ENCODE measurements at regions of chr1 and their contacts with region 1.

Region 1: DNA sequence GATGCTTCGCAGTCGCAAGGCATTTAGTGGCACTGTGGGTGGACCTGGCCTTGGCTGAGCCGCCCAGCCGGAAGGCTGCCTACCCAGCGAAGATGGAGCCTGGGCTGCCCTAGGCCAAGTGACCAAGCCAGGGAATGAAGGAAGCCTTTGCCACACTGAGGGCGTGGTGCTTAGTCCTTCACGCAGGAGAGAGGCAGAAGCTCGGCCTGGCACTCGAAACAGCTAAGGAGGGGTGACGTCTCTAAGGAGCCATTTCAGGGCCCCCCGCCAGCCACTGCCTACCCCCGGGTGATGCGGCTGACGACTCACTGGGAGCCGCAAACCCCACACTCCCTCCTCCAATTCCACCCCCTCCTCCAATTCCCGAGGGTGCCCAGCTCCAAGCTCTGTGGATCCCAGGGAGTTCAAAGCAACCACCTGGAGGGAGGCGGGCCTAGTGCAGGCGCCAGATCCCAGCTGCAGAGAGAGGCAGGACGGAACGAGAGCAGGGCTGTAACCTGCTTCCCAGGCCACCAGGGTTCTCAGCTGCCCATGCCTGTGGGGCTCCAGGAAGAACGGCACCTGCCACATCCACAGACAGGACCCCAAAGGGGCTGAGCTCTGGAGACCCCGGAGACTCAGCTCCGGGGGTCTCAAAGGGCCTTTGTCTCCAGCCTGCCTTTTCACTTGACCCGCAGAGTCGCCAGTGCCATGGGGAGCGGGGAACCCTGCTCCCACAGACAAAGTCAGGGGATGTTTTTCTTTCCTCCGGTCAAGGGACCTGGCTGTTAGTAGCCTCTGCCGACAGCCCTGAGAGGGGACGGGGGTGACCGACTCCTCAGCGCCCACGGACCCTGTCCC is 75.8 kb downstream of the ARHGEF16 start:
- DNase-seq: no peak
- ATAC-seq: no peak
- H3K4me3 Mint-ChIP-seq: peak overlapping the region; percentile 71
- H3K27ac Mint-ChIP-seq: peak overlapping the region; percentile 57
- H3K4me1 Mint-ChIP-seq: peaks cover 12% of the 10 kb centered on the region
- H3K27me3 Mint-ChIP-seq: no peaks in the 10 kb centered on the region
- CTCF ChIP-seq: no peak

Region 2: GRCh38 chr1:3518256-3518655 is 12.1 kb before region 1 on chr1:
- CTCF ChIA-PET with region 1: interaction called, 23 read pairs
- POLR2A ChIA-PET with region 1: no interaction called
- intact Hi-C with region 1: no loop called
- DNase-seq: peak; percentile 56
- ATAC-seq: peak; percentile 20
- H3K4me3 Mint-ChIP-seq: no peak overlapping the region
- H3K27ac Mint-ChIP-seq: no peak overlapping the region
- H3K4me1 Mint-ChIP-seq: no peaks in the 10 kb centered on the region
- H3K27me3 Mint-ChIP-seq: no peaks in the 10 kb centered on the region
- CTCF ChIP-seq: peak; percentile 75

Measured in activated CD8-positive, alpha-beta T cell treated with anti-CD3 and anti-CD28 coated beads for 36 hours (primary cell).